Ascending aorta (tissue), 2 donors: ENCODE measurements at regions of chr1 and their contacts with region 1.

Region 1: DNA sequence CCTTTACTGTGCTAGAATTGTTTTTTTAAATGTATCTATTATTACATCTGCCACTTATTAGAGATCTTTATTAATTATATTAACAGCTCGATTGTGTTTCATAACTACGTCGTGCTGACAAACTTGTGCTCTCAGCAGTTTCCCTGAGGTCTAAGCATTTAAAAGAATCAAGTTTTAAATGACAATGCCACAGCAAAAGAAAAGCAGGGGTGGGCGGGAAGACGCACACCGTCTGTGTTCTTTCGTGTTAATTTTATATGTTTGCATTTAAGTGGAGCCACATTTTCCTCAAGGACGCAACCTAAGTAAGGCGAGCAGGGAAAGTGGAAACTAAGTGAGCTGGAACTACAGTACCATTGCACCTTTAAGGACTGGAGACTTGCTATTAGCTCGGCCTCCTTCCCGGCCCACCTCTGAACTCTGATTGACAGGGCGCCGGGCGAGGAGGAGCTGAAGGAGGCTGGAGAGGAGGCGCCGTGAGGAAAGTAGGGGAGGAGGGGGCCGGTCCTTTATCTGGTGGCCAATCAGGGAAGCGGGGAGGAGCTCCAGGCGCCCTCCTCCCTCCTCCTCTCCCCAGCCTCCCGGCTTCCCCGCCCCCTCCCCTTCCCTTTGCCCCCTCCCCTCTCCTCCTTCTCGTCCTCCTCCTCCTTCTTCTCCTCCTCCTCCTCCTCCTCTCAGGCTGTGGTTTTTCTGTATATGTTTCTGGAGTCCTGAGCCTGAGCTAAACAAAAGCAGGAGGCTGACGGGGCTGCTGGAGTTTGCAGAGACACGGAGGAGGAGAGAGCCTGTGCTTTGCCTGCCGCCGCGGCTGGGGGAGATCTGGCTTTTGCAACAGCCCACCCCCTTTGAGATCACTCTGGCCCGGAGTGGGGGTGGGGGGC is at the start of gene PBX1:
- DNase-seq: peak; percentile 95 to 99
- H3K4me3 ChIP-seq: peak within 1 kb of the TSS; percentile 69 to 82
- H3K27ac ChIP-seq: peak within 1 kb of the TSS; percentile 79 to 84
- H3K4me1 ChIP-seq: no peaks in the 10 kb centered on the region
- H3K27me3 ChIP-seq: no peaks in the 10 kb centered on the region
- CTCF ChIP-seq: no peak
- total RNA-seq, gene PBX1: 37.4 TPM

Region 2: DNA sequence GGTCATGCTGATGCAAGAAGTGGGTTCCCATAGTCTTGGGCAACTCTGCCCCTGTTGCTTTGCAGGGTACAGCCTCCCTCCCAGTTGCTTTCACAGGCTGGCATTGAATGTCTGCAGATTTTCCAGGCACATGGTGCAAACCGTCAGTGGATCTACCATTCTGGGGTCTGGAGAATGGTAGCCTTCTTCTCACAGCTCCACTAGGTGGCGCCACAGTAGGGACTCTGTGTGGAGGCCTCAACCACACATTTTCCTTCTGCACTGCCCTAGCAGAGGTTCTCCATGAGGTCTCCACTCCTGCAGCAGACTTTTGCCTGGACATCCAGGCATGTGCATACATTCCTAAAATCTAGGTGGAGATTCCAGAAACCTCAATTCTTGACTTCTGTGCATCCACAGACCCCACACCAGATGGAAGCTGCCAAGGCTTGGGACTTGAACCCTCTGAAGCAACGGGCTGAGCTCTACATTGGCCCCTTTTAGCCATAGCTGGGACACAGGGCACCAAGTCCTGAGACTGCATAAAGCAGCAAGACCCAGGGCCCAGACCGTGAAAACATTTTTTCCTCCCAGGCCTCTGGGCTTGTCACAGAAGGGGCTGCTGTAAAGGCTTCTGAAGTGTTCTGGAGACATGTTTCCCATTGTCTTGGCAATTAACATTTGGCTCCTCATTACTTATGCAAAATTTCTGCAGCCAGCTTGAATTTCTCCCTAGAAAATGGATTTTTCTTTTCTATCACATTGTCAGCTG is 465.9 kb before region 1 on chr1:
- intact Hi-C with region 1: no loop called
- DNase-seq: no peak
- H3K4me3 ChIP-seq: no peak overlapping the region
- H3K27ac ChIP-seq: no peak overlapping the region
- H3K4me1 ChIP-seq: no peaks in the 10 kb centered on the region
- H3K27me3 ChIP-seq: no peaks in the 10 kb centered on the region
- CTCF ChIP-seq: no peak

Region 3: GRCh38 chr1:164518692-164519332 is 39.9 kb before region 1 on chr1:
- intact Hi-C with region 1: loop called (anchors 2 kb)
- DNase-seq: no peak
- H3K4me3 ChIP-seq: no peak overlapping the region
- H3K27ac ChIP-seq: no peak overlapping the region
- H3K4me1 ChIP-seq: no peaks in the 10 kb centered on the region
- H3K27me3 ChIP-seq: no peaks in the 10 kb centered on the region
- CTCF ChIP-seq: no peak

Region 4: DNA sequence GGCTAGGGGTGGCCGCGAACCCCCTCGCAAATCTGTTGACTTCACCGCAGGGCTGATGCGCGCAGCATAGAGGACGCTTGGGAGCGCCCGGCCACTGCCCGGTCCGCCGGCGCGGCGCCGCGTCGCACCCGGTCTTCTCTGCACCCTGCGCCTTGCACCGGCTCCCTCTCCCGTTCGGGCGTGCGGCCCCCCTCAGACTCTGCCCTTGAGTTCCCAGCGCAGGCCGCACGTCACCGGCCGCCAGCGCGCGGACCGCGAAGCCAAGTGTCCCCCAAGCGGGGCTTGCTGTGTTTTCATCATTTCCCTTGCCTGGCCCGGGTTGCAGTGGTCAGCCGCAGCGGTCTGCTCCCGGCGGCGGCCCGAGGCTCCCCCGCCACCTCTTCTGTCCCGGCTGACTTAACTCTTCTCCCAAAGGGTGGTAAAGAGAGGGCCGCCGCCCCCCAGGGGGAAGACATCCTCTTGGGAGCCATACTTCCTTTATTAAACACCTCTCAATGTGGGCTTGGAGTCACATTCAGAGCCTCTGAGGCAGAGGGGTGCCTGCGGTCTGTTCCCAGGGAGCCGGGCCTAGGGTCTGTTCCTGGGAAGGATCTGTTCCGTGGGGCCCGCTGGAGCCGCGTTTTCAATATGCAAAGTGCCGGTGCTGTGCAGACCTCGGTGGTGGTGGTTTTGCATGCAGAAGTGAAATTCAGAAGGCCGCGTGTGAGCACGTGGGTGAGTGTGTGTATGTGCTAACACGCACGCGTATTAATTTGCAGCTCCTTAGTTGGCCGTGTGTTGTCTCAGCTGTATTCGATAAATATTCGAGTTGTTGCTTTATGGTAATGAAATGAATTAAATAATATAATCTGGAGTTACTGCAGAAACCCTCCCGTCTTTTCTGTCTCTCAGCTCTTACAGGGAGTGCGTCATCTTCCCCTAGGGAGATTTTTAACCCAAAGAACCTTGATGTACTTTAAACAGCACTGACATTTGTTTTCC is 17.9 kb after region 1 on chr1:
- intact Hi-C with region 1: loop called (anchors 2 kb)
- DNase-seq: peak in 1 of 2 donors; percentile 69
- H3K4me3 ChIP-seq: peak overlapping the region; percentile 47 to 67
- H3K27ac ChIP-seq: peak overlapping the region; percentile 74 to 84
- H3K4me1 ChIP-seq: peaks cover 0 to 52% of the 10 kb centered on the region in 2 donors
- H3K27me3 ChIP-seq: no peaks in the 10 kb centered on the region
- CTCF ChIP-seq: peak in 1 of 3 experiments; percentile 25

Region 5: DNA sequence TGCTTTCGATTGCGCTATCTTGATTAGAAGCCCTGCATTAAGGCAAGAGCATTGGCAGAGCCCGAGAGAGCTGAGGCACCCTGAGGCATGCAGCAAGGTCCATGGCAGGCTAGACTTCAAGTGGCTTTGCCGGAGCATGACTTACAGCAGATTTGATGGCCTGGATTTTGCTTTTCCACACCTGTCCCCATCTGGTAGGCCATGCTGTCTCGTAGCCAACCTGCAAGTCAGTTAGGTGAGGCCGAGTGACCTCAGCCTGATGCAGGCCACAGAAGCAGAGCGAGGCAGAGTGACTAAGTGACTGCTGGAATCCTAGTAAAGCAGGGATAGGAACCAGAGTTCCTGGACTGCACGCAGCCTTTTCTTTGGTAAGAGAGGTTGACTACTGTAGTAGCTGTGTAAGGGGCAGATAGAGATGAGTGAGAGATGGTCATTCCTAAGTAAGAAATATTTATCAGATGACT is 149.2 kb after region 1 on chr1:
- intact Hi-C with region 1: loop called (anchors 1 kb)
- DNase-seq: peak; percentile 39 to 77
- H3K4me3 ChIP-seq: no peak overlapping the region
- H3K27ac ChIP-seq: peak overlapping the region; percentile 48 to 77
- H3K4me1 ChIP-seq: peaks cover 0 to 41% of the 10 kb centered on the region in 2 donors
- H3K27me3 ChIP-seq: no peaks in the 10 kb centered on the region
- CTCF ChIP-seq: no peak

Region 6: DNA sequence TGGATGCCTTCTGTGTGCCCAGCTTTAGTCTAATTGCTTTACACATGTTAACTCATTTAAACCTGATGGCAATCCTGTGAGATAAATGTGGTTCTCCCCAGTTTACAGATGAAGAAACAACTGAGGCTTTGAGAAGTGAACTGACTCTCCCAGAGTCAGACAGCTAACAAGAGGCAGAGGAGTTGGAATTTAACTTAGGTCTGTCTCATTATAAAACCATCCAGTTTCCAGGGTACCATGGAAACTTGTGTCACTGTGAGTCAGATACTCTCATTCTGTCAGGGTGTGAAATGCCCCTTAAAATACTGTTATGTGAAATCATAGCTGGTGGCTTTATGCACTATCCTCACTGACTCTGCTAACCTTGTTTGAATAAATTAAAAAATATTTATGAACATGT is 206.9 kb after region 1 on chr1:
- intact Hi-C with region 1: loop called (anchors 5 kb)
- DNase-seq: no peak
- H3K4me3 ChIP-seq: no peak overlapping the region
- H3K27ac ChIP-seq: peak overlapping the region; percentile 74 to 82
- H3K4me1 ChIP-seq: peaks cover 0 to 30% of the 10 kb centered on the region in 2 donors
- H3K27me3 ChIP-seq: no peaks in the 10 kb centered on the region
- CTCF ChIP-seq: no peak

Region 7: DNA sequence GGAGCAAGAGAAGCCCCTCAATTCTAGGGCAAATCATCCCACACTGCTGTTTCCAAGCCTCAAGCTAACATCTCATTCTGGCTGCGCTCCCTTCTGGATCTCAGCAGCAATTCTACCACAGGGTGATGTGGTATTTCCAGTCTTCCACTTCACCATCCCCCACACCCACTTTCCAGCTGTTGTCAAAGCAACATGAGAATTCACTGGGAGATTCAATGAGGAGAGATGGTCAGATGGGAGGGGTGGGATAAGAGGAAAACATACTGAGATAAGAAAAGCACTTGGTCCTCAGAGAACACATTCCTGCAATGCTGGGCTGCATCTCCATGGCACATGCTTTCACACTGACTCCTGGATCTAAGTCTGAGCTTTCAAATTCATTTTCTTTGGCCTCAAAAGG is 937.8 kb after region 1 on chr1:
- intact Hi-C with region 1: no loop called
- DNase-seq: no peak
- H3K4me3 ChIP-seq: no peak overlapping the region
- H3K27ac ChIP-seq: no peak overlapping the region
- H3K4me1 ChIP-seq: no peaks in the 10 kb centered on the region
- H3K27me3 ChIP-seq: no peaks in the 10 kb centered on the region
- CTCF ChIP-seq: no peak